ENCODE measurements at regions of chr9 and their contacts with region 1.

Region 1: GRCh38 chr9:88303721-88304451 is 84.4 kb upstream of the SPIN1 start:
- DNase-seq: peak; percentile 65
- H3K4me3 Mint-ChIP-seq: peak overlapping the region; percentile 58
- H3K27ac Mint-ChIP-seq: peak overlapping the region; percentile 83
- H3K4me1 Mint-ChIP-seq: peaks cover 46% of the 10 kb centered on the region
- H3K27me3 Mint-ChIP-seq: peaks cover 7% of the 10 kb centered on the region

Region 2: DNA sequence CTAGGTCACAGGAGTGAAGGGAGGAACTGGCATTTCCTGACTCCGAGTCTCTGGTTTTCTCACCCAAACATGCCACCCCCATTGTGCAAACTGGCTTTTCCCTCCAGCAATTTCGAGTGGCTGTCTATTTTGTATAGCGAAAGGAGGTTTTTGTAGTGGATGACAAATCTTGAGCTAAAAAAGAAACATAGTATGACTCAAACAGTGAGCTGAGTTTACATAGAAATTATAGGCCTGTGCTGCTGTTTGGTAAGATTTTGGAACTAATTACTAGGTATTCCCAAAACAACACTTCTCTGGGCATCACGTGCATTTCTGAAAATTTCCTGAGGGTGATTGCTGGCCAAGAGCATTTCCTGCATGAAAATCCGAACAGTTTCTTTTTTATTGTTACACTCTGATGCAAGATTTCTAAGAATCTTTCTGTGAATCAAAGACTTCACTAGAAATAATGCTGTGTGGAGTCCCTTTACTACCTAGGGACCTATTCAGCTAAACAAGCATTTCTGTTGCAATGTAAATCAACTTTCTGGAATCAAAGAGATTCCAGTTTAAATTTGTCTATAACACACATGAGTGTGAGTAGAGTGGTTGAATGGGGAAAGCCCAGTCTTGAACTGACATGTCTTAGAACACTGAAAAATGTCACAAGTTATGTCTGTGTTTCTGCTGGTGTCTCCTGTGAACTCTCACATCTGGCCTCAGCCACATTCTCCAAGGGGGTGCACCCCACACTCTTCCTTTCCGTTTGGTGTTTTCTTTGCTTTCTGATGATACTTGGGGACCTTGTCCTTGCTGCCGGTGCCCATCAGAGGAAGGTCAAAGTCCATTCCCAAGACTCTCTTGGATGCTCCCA is 839.5 kb before region 1 on chr9:
- intact Hi-C with region 1: loop called (anchors 10 kb)
- DNase-seq: no peak
- H3K4me3 Mint-ChIP-seq: peak overlapping the region; percentile 39
- H3K27ac Mint-ChIP-seq: peak overlapping the region; percentile 92
- H3K4me1 Mint-ChIP-seq: peaks cover 18% of the 10 kb centered on the region
- H3K27me3 Mint-ChIP-seq: no peaks in the 10 kb centered on the region

Region 3: GRCh38 chr9:88291856-88292255 is 12.0 kb before region 1 on chr9:
- intact Hi-C with region 1: no loop called
- DNase-seq: no peak
- H3K4me3 Mint-ChIP-seq: no peak overlapping the region
- H3K27ac Mint-ChIP-seq: no peak overlapping the region
- H3K4me1 Mint-ChIP-seq: peaks cover 1% of the 10 kb centered on the region
- H3K27me3 Mint-ChIP-seq: peaks cover 21% of the 10 kb centered on the region

Region 4: GRCh38 chr9:88322906-88323566 is 19.1 kb after region 1 on chr9:
- intact Hi-C with region 1: loop called (anchors 2 kb)
- DNase-seq: peak; percentile 71
- H3K4me3 Mint-ChIP-seq: peak overlapping the region; percentile 1
- H3K27ac Mint-ChIP-seq: peak overlapping the region; percentile 83
- H3K4me1 Mint-ChIP-seq: peaks cover 46% of the 10 kb centered on the region
- H3K27me3 Mint-ChIP-seq: peaks cover 6% of the 10 kb centered on the region

Region 5: DNA sequence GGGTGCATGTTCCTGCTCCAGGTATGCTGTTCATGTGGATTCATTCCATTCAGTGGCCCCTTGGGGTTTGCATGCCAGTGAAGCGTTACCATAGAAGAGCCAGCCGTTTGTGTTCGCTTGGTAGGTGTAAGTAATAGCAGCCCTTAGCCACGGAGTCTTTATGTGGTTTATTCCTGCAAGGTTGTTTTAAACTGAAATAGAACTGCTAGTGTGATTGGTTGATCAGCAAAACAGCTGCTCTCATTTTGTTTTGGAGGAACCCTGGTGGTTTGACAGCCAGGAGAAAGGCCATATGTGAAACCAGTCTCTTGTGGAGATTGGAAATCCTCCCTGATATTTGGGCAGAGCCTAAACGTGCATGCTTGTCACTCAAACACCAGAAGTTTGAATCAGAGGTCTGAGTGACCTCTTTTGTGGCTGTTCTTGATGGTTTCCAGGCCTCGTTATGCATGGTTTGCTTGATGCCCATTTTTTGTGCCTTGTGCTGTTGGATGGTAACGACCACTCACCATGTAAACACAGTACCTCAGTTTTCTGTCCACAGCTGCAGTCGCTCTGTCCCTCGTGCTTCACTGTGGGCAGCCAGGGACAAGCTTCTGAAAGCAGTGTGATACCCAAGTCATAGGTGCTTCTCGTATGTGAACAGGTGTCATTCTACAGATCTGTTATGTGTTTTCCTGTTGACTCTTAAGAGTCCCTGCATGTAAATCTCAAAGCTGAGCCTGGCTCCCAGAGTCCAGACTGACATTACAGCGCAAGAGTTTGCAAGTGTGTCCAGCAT is 172.8 kb after region 1 on chr9:
- intact Hi-C with region 1: loop called (anchors 1 kb)
- DNase-seq: no peak
- H3K4me3 Mint-ChIP-seq: no peak overlapping the region
- H3K27ac Mint-ChIP-seq: no peak overlapping the region
- H3K4me1 Mint-ChIP-seq: peaks cover 15% of the 10 kb centered on the region
- H3K27me3 Mint-ChIP-seq: no peaks in the 10 kb centered on the region